ENCODE measurements at regions of chrX and their contacts with region 1.

Region 1: DNA sequence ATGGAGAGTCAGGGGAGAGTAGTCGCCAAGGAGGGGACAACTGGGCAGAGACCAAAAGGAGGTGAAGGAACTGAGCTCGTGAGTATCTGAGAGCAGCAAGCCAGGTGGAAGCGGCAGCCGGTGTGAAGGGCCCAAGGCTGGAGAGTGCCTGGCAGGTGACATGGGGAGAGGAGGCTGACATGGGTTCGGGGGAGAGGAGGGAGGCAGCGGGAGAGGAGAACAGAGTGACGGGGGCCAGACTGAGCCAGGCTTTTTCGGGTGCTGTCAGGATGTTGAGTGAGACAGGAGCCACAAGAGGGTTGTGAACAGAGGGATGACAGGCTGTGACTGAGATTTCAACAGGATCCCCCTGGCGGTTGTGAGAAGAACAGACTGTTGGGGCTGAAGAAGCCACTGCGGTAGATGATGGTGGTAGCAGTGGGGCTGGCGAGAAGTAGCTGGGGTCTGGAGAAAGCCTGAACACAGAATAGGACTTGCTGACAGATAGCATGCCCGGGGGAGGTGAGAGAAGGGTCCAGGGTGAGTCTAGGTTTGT is 5.7 kb downstream of the ELK1 start:
- DNase-seq: no peak
- H3K4me3 ChIP-seq: no peak overlapping the region
- H3K27ac ChIP-seq: no peak overlapping the region
- H3K4me1 ChIP-seq: peaks cover 0 to 6% (median 0%) of the 10 kb centered on the region in 4 experiments; a peak in 1 of 7 replicates
- H3K27me3 ChIP-seq: no peaks in the 10 kb centered on the region
- CTCF ChIP-seq: peak; percentile 50 to 76 (median 74)
- EP300 ChIP-seq: no peak
- POLR2A ChIP-seq: no peak
- RAD21 ChIP-seq: peak; percentile 37 to 48; a peak in 3 of 4 replicates

Region 2: GRCh38 chrX:47581731-47582647 is 62.6 kb before region 1 on chrX and contains the start of gene TIMP1:
- CTCF ChIA-PET with region 1: interaction called, 12 read pairs
- POLR2A ChIA-PET with region 1: no interaction called
- DNase-seq: peak in 1 of 2 experiments; percentile 70
- H3K4me3 ChIP-seq: peak within 1 kb of the TSS; percentile 45 to 66 (median 48)
- H3K27ac ChIP-seq: no peak within 1 kb of the TSS
- H3K4me1 ChIP-seq: peaks cover 0 to 7% (median 3%) of the 10 kb centered on the region in 4 experiments; a peak in 3 of 7 replicates
- H3K27me3 ChIP-seq: no peaks in the 10 kb centered on the region
- CTCF ChIP-seq: no peak
- EP300 ChIP-seq: no peak
- POLR2A ChIP-seq: peak in 1 of 2 experiments; percentile 37; a peak in 1 of 3 replicates
- RAD21 ChIP-seq: no peak
- total RNA-seq, gene TIMP1: 58.6 and 62.5 TPM in 2 replicates

Region 3: GRCh38 chrX:47608130-47608810 is 36.4 kb before region 1 on chrX:
- CTCF ChIA-PET with region 1: interaction called, 13 read pairs
- POLR2A ChIA-PET with region 1: no interaction called
- DNase-seq: no peak
- H3K4me3 ChIP-seq: 0 out of 8 replicates have a peak overlapping the region, but pooled peaks of 1 of the 4 experiments have one; percentile 24
- H3K27ac ChIP-seq: peak overlapping the region; percentile 67; the same call in 1 of the 2 replicates
- H3K4me1 ChIP-seq: peaks cover 0 to 8% (median 3%) of the 10 kb centered on the region in 4 experiments; a peak in 6 of 7 replicates
- H3K27me3 ChIP-seq: no peaks in the 10 kb centered on the region
- CTCF ChIP-seq: no peak
- EP300 ChIP-seq: peak in 1 of 2 experiments; percentile 63; a peak in 1 of 3 replicates
- POLR2A ChIP-seq: 0 out of 3 replicates have a peak, but pooled peaks of 1 of the 2 experiments have one; percentile 36
- RAD21 ChIP-seq: no peak

Region 4: DNA sequence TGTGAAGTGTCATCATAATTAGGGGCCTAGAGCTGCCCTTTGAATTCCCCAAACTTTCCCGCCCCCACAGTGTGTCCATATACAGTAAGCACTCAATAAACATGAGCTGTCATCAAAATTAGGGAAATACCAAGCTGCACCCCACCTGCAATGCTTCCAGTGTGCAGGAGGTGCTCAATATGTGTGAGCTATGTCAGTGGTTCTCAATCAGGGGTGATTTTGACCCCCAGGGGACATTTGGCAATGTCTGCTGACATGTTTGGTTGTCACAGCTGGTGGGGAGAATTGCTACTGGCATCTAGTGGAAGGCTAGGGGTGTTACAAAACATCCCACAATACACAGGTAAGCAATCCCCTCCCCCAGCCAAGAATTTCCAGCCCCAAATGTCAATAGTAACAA is 15.6 kb before region 1 on chrX:
- CTCF ChIA-PET with region 1: interaction called, 15 read pairs
- POLR2A ChIA-PET with region 1: interaction called, 4 read pairs
- DNase-seq: no peak
- H3K4me3 ChIP-seq: no peak overlapping the region
- H3K27ac ChIP-seq: no peak overlapping the region
- H3K4me1 ChIP-seq: peaks cover 0 to 3% (median 0%) of the 10 kb centered on the region in 4 experiments; a peak in 4 of 7 replicates
- H3K27me3 ChIP-seq: no peaks in the 10 kb centered on the region
- CTCF ChIP-seq: peak in 2 of 3 experiments; percentile 48 to 55; a peak in 3 of 4 replicates
- EP300 ChIP-seq: no peak
- POLR2A ChIP-seq: no peak
- RAD21 ChIP-seq: peak; percentile 55 to 71

Measured in H1 (cell line).